ENCODE measurements at regions of chr16 and their contacts with region 1.

Region 1: DNA sequence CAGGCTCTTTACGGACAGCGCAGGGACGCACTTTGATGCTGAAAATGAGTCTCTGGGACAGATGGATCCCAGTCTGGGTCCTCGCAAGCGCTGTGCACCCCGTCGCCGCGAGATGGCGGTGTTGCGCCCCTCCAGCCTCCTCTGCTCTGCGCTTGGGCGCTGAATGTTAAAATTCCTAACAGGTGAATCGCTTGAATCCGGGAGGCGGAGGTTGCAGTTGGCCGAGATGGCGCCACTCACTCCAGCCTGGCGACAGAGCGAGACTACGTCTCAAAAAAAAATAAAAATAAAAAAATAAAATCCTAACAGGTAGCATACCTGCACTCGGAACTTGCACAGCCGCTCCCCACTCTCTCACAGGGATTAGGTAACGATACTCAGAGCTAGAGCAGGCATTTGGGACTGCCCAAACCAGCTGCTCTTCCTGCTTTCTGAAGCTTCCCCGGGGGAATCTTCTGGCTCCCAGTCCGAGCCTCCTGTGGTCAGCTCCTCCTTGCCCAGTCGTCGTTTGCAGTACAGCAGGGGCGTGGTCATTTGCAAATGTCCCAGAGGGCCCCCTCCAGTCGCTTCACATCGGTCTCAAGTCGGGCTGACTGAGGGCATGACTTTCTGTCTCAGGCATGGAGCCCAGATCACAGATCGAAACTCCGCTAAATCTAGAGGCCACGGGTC is 26.2 kb upstream of the OSGIN1 start:
- DNase-seq: peak; percentile 89 to 92
- H3K4me3 ChIP-seq: peak overlapping the region; percentile 53
- H3K27ac ChIP-seq: peak overlapping the region; percentile 94
- H3K4me1 ChIP-seq: peaks cover 25% of the 10 kb centered on the region
- H3K27me3 ChIP-seq: no peaks in the 10 kb centered on the region
- CTCF ChIP-seq: peak; percentile 86

Region 2: GRCh38 chr16:83958137-83958845 is 31.4 kb after region 1 on chr16:
- CTCF ChIA-PET with region 1: interaction called, 5 read pairs
- POLR2A ChIA-PET with region 1: interaction called, 12 read pairs
- intact Hi-C with region 1: loop called (anchors 1 kb)
- DNase-seq: no peak
- H3K4me3 ChIP-seq: no peak overlapping the region
- H3K27ac ChIP-seq: no peak overlapping the region
- H3K4me1 ChIP-seq: peaks cover 15% of the 10 kb centered on the region
- H3K27me3 ChIP-seq: no peaks in the 10 kb centered on the region
- CTCF ChIP-seq: no peak

Region 3: GRCh38 chr16:84007965-84008364 is 81.1 kb after region 1 on chr16:
- CTCF ChIA-PET with region 1: no interaction called
- POLR2A ChIA-PET with region 1: no interaction called
- intact Hi-C with region 1: no loop called
- DNase-seq: no peak
- H3K4me3 ChIP-seq: no peak overlapping the region
- H3K27ac ChIP-seq: no peak overlapping the region
- H3K4me1 ChIP-seq: no peaks in the 10 kb centered on the region
- H3K27me3 ChIP-seq: peaks cover 23% of the 10 kb centered on the region
- CTCF ChIP-seq: no peak

Region 4: GRCh38 chr16:84044118-84044488 is 117.2 kb after region 1 on chr16:
- CTCF ChIA-PET with region 1: interaction called, 3 read pairs
- POLR2A ChIA-PET with region 1: interaction called, 4 read pairs
- intact Hi-C with region 1: loop called (anchors 1 kb)
- DNase-seq: no peak
- H3K4me3 ChIP-seq: no peak overlapping the region
- H3K27ac ChIP-seq: no peak overlapping the region
- H3K4me1 ChIP-seq: no peaks in the 10 kb centered on the region
- H3K27me3 ChIP-seq: peaks cover 28% of the 10 kb centered on the region
- CTCF ChIP-seq: peak; percentile 53; the same call in 1 of the 2 replicates

Region 5: DNA sequence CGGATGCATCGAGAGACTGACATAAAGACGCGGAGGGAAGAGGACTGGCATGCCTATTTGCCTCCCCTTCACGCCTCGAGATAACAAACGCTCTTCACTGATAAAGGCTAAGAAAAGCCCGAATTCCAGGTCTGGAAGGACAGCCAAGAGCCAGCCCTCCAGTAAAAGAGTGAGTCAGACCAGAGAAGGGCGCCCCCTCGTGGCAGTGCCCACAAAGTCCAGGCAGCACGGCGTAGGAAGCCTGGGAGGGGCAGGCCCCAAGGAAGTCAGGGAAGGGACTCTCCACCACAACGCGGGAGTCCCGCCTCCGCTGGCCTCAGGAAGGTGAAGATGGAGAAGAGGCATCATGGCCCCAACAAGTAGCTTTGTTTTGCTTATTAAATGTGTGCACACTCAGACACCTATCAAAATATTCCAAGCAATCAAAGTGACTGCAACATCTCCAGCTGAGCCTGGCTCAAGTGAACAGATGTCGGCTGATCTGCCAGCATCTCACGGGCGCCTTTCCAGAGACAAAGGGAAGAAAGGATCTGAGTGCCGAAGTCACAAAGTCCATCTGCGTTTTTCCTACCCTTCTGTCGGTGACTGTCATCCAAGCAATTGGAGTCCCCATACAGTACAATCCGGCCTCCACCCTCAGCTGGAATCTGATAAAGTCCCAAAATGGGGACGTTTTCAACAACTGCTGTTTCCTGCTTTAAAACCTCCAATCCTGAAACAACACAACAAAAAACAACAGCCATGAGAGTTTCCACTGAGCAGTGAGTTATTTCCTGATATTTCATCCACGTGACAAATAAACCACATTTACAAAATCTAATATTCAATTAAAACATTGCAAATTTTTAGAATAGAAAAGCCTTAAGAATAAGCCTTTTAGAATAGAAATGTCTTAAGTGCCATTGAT is 136.1 kb after region 1 on chr16:
- CTCF ChIA-PET with region 1: interaction called, 4 read pairs
- POLR2A ChIA-PET with region 1: no interaction called
- intact Hi-C with region 1: loop called (anchors 1 kb)
- DNase-seq: peak; percentile 44 to 76
- H3K4me3 ChIP-seq: no peak overlapping the region
- H3K27ac ChIP-seq: no peak overlapping the region
- H3K4me1 ChIP-seq: no peaks in the 10 kb centered on the region
- H3K27me3 ChIP-seq: no peaks in the 10 kb centered on the region
- CTCF ChIP-seq: peak; percentile 89

Region 6: GRCh38 chr16:84119431-84119830 is 192.6 kb after region 1 on chr16:
- CTCF ChIA-PET with region 1: no interaction called
- POLR2A ChIA-PET with region 1: no interaction called
- intact Hi-C with region 1: no loop called
- DNase-seq: peak; percentile 78 to 94
- H3K4me3 ChIP-seq: peak overlapping the region; percentile 2; the same call in 1 of the 2 replicates
- H3K27ac ChIP-seq: peak overlapping the region; percentile 51
- H3K4me1 ChIP-seq: peaks cover 39% of the 10 kb centered on the region
- H3K27me3 ChIP-seq: no peaks in the 10 kb centered on the region
- CTCF ChIP-seq: no peak

Region 7: GRCh38 chr16:84294531-84295142 is 367.8 kb after region 1 on chr16 and contains the start of gene WFDC1:
- CTCF ChIA-PET with region 1: no interaction called
- POLR2A ChIA-PET with region 1: no interaction called
- intact Hi-C with region 1: no loop called
- DNase-seq: no peak
- H3K4me3 ChIP-seq: no peak within 1 kb of the TSS
- H3K27ac ChIP-seq: no peak within 1 kb of the TSS
- H3K4me1 ChIP-seq: no peaks in the 10 kb centered on the region
- H3K27me3 ChIP-seq: peaks cover 39% of the 10 kb centered on the region
- CTCF ChIP-seq: no peak
- total RNA-seq, gene WFDC1: not detected in 2 replicates

Region 8: DNA sequence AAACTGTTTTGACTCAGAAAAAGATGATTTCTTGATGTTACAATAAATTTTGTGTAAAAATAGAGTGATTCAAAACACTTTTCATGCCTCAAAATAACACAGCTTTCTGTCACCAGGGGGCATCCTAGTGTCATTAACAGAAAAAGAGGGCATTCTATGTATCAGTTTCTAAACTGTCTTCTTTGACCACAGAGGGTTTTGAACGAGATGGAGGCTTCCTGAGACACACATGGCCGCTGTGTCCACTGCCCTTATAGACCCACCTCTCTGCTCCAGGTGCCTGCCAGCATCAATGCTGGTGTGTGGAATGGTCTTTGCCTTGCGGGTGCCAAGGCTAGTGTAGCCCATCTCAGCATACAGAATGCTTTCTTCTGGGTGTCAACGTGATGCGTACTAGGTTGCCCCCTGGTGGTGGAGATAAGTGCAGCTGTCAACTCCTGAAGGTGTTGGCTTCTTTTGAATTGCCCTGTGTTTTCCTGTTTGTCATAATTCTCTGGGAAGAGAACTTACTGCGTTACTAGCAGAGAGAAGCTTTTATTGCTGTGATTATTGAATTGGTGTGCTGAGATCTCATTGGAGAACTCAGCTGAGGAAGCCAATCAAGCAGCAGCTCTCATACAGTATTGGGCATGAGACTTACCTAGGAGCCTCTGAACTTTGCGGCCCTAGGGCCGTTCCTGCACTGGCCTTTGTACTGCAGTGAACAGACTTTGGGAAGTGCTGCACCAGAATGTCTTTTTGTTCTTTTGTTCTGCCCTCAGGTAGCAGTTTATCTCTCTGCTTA is 811.6 kb after region 1 on chr16:
- CTCF ChIA-PET with region 1: no interaction called
- POLR2A ChIA-PET with region 1: interaction called, 11 read pairs
- intact Hi-C with region 1: no loop called
- DNase-seq: peak in 1 of 2 experiments; percentile 66
- H3K4me3 ChIP-seq: no peak overlapping the region
- H3K27ac ChIP-seq: 0 out of 2 replicates have a peak overlapping the region, but pooled peaks have one; percentile 18
- H3K4me1 ChIP-seq: peaks cover 48% of the 10 kb centered on the region
- H3K27me3 ChIP-seq: no peaks in the 10 kb centered on the region
- CTCF ChIP-seq: peak; percentile 89